Ascending aorta (tissue), 2 donors: ENCODE measurements at regions of chr9 and their contacts with region 1.

Region 1: DNA sequence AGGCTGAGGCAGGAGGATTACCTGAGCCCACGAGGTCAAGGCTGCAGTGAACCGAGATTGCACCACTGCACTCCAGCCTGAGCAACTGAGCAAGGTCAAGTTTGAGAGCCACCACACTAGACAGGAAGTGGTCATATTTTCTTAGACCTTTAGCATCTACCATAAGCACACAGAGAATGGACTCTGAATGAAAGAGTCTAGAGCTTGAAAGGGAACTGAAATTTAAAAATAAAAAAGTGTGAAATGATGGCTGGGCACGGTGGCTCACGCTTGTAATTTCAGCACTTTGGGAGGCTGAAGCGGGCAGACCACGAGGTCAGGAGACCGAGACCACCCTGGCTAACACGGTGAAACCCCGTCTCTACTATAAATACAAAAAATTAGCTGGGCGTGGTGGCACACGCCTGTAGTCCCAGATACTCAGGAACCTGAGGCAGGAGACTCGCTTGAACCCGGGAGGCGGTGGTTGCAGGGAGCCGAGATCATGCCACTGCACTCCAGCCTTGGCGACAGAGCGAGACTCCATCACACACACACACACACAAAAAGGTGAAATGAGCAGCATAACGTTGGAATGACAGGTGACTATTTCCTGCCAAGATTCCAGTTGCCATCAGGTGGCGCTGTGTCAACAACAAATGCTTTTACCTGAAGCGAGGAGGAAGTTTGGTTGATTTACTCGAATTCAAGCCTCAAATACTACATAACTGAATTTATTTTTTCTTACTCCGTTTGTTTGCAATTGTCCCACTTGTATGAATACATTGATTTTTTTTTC is 21.3 kb upstream of the AK3 start:
- DNase-seq: peak in 1 of 2 donors; percentile 86
- H3K4me3 ChIP-seq: peak overlapping the region; percentile 37 to 38
- H3K27ac ChIP-seq: peak overlapping the region; percentile 9 to 36
- H3K4me1 ChIP-seq: peaks cover 0 to 2% of the 10 kb centered on the region in 2 donors
- H3K27me3 ChIP-seq: no peaks in the 10 kb centered on the region
- CTCF ChIP-seq: peak; percentile 72 to 78 (median 78)

Region 2: DNA sequence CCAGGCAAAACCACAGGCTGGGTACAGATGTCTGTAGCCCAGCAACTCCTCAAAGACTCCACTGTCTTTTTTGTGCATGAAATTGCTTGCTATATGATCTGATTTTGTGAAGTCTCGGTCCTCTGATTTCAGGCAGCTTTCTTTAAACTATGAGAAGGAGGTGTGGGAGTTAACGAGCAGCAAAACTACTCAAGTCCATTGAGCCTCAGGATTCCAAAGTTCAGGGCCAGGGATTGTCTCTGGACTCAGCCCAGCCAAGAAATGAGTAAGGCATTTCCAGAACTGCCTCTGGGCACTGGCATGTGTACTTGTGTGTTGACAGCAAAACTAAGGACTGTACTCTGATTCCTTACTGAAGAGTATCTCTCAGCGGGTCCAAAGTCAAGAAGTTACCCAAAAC is 409.1 kb before region 1 on chr9:
- intact Hi-C with region 1: no loop called
- DNase-seq: no peak
- H3K4me3 ChIP-seq: no peak overlapping the region
- H3K27ac ChIP-seq: no peak overlapping the region
- H3K4me1 ChIP-seq: no peaks in the 10 kb centered on the region
- H3K27me3 ChIP-seq: no peaks in the 10 kb centered on the region
- CTCF ChIP-seq: no peak

Region 3: GRCh38 chr9:5062631-5063030 is 300.3 kb after region 1 on chr9:
- intact Hi-C with region 1: loop called (anchors 10 kb)
- DNase-seq: no peak
- H3K4me3 ChIP-seq: no peak overlapping the region
- H3K27ac ChIP-seq: no peak overlapping the region
- H3K4me1 ChIP-seq: no peaks in the 10 kb centered on the region
- H3K27me3 ChIP-seq: no peaks in the 10 kb centered on the region
- CTCF ChIP-seq: no peak

Region 4: GRCh38 chr9:5263351-5264218 is 501.3 kb after region 1 on chr9:
- intact Hi-C with region 1: loop called (anchors 10 kb)
- DNase-seq: no peak
- H3K4me3 ChIP-seq: peak overlapping the region in 1 of 2 donors; percentile 12
- H3K27ac ChIP-seq: no peak overlapping the region
- H3K4me1 ChIP-seq: no peaks in the 10 kb centered on the region
- H3K27me3 ChIP-seq: no peaks in the 10 kb centered on the region
- CTCF ChIP-seq: peak in 2 of 3 experiments; percentile 13 to 25